AG04449 (cell line): ENCODE measurements at regions of chr9 and their contacts with region 1.

Region 1: DNA sequence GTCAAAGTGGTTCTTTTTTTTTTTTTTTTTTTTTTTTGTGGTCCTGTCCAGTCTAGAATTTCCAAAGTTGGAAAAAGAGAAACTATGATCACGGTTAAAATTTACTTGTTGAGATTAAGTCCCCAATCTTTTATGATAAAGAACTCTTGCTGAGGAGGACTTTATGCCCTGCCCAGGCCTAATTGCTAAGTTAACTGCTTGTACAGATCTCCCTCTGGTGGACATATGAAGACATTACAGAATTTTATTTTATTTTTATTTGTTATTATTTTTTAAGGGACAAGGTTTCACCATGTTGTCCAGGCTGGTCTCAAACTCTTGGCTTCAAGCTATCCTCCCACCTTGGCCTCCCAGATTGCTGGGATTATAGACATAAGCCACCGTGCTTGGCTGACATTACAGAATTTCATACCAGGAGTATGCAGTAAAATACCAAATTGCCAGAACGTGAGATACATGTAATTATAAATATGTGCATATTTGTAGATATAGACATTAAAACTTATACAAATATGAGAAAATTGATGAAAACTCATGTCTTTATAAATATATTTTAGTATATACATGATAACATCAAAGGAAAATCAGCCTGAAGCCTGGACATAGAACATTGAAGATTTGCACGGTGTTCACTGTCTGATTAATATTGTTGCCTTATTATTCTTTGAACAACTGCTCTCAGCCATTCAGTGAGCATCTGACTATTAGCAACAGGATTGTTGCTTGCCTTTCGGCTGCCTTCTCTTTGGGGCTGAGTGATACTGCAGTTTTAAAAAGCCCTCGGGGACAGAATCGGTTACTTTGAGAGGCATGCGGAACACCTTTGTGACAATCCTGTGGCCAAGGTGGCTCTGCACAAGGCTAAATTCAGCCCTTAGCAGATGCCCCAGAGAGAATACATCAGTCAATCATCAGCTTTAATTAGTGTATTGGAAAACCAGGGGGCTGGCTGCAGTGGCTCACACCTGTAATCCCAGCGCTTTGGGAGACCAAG is 91.0 kb downstream of the RFK start:
- DNase-seq: peak; percentile 12
- H3K4me3 ChIP-seq: no peak overlapping the region
- CTCF ChIP-seq: peak; percentile 24

Region 2: GRCh38 chr9:75866273-75866871 is 436.9 kb before region 1 on chr9:
- CTCF ChIA-PET with region 1: interaction called, 10 read pairs
- POLR2A ChIA-PET with region 1: no interaction called
- DNase-seq: no peak
- H3K4me3 ChIP-seq: no peak overlapping the region
- CTCF ChIP-seq: peak; percentile 57

Region 3: GRCh38 chr9:75979146-75979761 is 324.0 kb before region 1 on chr9:
- CTCF ChIA-PET with region 1: interaction called, 19 read pairs
- POLR2A ChIA-PET with region 1: no interaction called
- DNase-seq: no peak
- H3K4me3 ChIP-seq: no peak overlapping the region
- CTCF ChIP-seq: peak; percentile 31

Region 4: DNA sequence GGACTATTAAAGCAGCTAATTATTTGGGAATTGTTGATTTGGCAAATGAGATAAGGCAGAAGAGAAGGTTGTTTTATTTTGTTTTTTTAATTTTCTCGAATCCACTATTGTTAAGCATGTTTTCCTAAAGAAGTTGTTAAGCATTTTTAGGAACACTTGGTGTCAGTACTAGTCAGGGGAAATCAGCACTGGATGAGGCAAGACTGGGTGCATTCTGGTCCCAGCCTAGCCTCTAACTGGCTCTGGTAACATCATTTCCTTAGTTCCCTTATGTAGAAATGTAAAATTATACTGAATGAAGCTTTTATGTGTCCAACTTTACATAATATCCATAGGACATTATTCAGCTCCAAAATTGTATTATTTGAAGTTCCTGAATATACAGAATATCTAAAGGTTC is 216.7 kb before region 1 on chr9:
- CTCF ChIA-PET with region 1: interaction called, 25 read pairs
- POLR2A ChIA-PET with region 1: no interaction called
- DNase-seq: no peak
- H3K4me3 ChIP-seq: no peak overlapping the region
- CTCF ChIP-seq: no peak

Region 5: DNA sequence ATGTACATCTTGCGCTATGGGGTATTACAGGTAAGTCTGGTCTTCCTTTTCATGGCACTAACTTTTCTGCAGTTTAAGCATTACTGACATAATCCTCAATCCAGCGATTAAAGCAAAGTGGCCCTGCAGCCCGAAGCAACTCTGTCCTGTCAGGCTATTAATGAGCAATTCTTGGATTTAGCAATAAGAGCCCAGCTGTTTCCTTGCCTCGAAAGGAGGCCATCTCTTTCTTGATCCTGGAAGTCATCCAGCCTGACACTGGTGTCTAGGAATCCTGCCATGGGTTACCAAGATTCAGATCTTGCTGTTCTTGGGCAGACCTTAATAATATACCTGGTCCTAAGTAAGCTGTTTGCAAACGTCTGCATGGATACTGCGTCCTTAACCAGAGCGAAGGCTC is 11.0 kb before region 1 on chr9:
- CTCF ChIA-PET with region 1: interaction called, 42 read pairs
- POLR2A ChIA-PET with region 1: no interaction called
- DNase-seq: no peak
- H3K4me3 ChIP-seq: no peak overlapping the region
- CTCF ChIP-seq: no peak

Region 6: GRCh38 chr9:76313771-76314170 is 10.5 kb after region 1 on chr9:
- CTCF ChIA-PET with region 1: interaction called, 29 read pairs
- POLR2A ChIA-PET with region 1: interaction called, 3 read pairs
- DNase-seq: no peak
- H3K4me3 ChIP-seq: no peak overlapping the region
- CTCF ChIP-seq: no peak

Region 7: GRCh38 chr9:76330034-76330433 is 26.8 kb after region 1 on chr9:
- CTCF ChIA-PET with region 1: no interaction called
- POLR2A ChIA-PET with region 1: no interaction called
- DNase-seq: no peak
- H3K4me3 ChIP-seq: no peak overlapping the region
- CTCF ChIP-seq: no peak